ENCODE measurements at regions of chr19 and their contacts with region 1.

Region 1: DNA sequence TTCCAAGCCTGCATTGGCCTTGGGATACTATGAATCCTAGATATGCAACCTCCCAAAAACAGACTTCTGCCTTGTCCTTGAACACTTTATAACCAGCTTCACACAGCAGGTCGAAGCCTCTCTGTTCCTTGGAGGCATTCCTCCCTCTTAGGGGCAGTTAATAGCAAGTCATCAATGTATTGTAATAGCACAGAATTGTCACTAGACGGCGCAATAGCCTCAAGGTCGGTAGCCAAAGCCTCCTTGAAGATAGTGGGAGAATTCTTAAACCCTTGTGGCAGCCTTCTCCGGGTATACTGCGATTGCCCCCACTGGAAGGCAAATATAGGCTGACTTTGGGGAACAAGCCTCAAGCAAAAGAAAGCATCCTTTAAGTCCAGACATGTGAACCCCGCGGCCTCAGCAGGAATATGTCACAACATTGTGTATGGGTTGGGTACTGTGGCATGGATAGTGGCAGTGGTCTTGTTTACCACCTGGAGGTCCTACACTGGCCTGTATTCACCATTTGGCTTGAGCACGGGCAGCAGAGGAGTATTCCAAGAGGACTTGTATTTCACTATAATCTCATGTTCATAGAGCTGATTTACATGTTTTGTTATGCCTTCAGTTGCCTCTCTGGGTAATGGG is 61.1 kb downstream of the ZNF431 start:
- DNase-seq: no peak
- ATAC-seq: peak; percentile 47 to 57

Region 2: GRCh38 chr19:20999731-21000352 is 203.1 kb before region 1 on chr19:
- intact Hi-C with region 1: no loop called
- DNase-seq: peak; percentile 91
- ATAC-seq: peak; percentile 100

Region 3: DNA sequence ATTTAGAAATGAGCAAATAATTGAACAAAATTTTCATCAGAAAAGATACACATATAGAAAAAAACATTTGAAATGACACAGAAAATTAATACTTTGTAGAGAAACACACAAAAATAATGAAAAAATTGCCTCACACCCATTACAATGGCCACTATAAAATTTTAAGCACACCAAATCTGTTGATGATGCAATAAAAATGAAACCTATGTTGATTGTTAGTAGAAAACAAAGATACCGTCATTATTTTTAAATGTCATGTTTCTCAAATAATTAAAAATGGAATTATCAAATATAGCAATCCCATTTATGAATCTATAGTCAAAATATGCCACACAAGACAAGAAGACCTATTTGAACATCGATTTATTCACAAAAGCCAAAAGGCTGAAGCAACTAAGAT is 35.7 kb after region 1 on chr19:
- intact Hi-C with region 1: no loop called
- DNase-seq: no peak
- ATAC-seq: no peak

Region 4: GRCh38 chr19:21482863-21483276 is 279.9 kb after region 1 on chr19:
- intact Hi-C with region 1: loop called (anchors 10 kb)
- DNase-seq: peak; percentile 67
- ATAC-seq: peak; percentile 87 to 96

Region 5: DNA sequence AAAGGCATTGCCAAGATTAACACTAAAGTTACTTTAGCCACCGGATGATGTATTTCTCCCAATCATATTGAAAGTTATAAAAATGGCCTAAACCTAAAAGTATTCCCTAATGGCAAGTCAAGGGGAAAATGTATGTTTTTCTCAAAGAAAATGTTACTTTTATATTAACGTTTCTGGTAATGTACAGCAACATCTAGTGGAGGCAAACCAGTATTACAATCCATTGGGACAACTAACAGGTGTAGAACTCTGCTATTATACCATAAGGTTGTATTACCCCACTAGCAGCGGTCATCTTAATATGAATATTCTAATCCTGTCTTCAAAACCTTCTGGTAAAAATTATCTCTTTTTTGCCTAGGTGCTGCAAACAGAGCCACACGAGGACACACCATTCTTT is 495.2 kb after region 1 on chr19:
- intact Hi-C with region 1: loop called in 1 of 2 experiments (anchors 10 kb)
- DNase-seq: no peak
- ATAC-seq: peak; percentile 68 to 79